MCF 10A (cell line): ENCODE measurements at regions of chr4 and their contacts with region 1.

Region 1: DNA sequence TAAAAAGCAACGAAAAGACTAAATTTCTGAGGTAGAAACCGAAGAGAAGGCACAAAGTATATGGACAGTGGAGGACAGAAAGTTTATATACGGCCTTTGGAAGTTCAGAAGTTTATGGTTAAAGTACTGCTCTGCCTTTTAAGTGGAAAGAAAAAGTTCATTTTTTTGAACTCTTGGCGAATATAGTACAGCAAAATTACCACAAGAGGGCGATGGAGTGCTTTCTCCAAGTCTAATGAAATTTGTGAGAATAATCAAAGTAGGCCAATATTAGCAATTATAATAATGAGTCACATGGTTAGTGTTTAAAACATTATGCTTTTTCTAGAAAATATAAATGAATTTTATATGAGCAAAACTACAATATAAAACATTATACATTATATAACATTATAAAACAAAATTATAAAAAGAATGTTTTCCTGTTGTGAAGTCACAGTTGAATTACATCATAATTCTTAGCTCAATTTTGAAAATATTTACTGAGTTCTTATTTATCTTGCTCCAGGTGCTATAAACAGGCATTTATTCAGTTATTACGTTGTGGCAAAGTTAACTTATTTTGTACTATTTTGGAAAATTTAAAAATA is 136.2 kb upstream of the BMPR1B start:
- DNase-seq: peak; percentile 50
- H3K4me3 Mint-ChIP-seq: no peak overlapping the region
- H3K27ac Mint-ChIP-seq: no peak overlapping the region
- H3K4me1 Mint-ChIP-seq: no peaks in the 10 kb centered on the region
- H3K27me3 Mint-ChIP-seq: no peaks in the 10 kb centered on the region
- CTCF ChIP-seq: peak; percentile 69

Region 2: GRCh38 chr4:94732358-94732698 is 110.7 kb after region 1 on chr4:
- CTCF ChIA-PET with region 1: interaction called, 4 read pairs
- POLR2A ChIA-PET with region 1: no interaction called
- intact Hi-C with region 1: loop called (anchors 5 kb)
- DNase-seq: no peak
- H3K4me3 Mint-ChIP-seq: no peak overlapping the region
- H3K27ac Mint-ChIP-seq: no peak overlapping the region
- H3K4me1 Mint-ChIP-seq: no peaks in the 10 kb centered on the region
- H3K27me3 Mint-ChIP-seq: no peaks in the 10 kb centered on the region
- CTCF ChIP-seq: no peak

Region 3: GRCh38 chr4:95095348-95095974 is 473.9 kb after region 1 on chr4:
- CTCF ChIA-PET with region 1: interaction called, 44 read pairs
- POLR2A ChIA-PET with region 1: interaction called, 5 read pairs
- intact Hi-C with region 1: loop called (anchors 1 kb)
- DNase-seq: peak; percentile 71
- H3K4me3 Mint-ChIP-seq: no peak overlapping the region
- H3K27ac Mint-ChIP-seq: peak overlapping the region; percentile 42
- H3K4me1 Mint-ChIP-seq: peaks cover 20% of the 10 kb centered on the region
- H3K27me3 Mint-ChIP-seq: no peaks in the 10 kb centered on the region
- CTCF ChIP-seq: peak; percentile 67

Region 4: GRCh38 chr4:95114521-95114920 is 492.9 kb after region 1 on chr4:
- CTCF ChIA-PET with region 1: interaction called, 12 read pairs
- POLR2A ChIA-PET with region 1: interaction called, 3 read pairs
- intact Hi-C with region 1: no loop called
- DNase-seq: no peak
- H3K4me3 Mint-ChIP-seq: no peak overlapping the region
- H3K27ac Mint-ChIP-seq: no peak overlapping the region
- H3K4me1 Mint-ChIP-seq: no peaks in the 10 kb centered on the region
- H3K27me3 Mint-ChIP-seq: no peaks in the 10 kb centered on the region
- CTCF ChIP-seq: no peak

Region 5: DNA sequence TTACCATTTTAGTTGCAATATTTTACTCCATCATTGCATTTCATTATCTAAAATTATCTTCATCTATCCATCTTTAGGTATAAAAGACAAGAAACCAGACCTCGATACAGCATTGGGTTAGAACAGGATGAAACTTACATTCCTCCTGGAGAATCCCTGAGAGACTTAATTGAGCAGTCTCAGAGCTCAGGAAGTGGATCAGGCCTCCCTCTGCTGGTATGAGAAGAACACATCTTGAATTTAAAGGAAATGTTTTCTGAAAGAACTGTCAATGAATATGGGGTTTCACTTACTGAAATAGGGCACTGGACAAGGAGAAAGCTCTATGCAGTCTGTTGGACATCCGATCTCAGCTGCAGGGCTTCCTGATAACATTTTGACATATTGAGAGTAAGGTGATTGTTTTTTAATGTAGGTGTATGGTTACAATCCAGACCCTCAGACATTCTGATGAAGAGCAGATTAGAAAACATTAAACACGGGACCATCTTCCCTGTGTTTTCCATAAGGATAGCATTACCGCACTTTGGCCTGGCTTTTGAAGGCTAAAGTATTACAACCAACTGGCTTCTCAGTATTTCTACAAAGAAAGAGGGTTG is 503.4 kb after region 1 on chr4:
- CTCF ChIA-PET with region 1: interaction called, 65 read pairs
- POLR2A ChIA-PET with region 1: interaction called, 4 read pairs
- intact Hi-C with region 1: loop called (anchors 1 kb)
- DNase-seq: peak; percentile 71
- H3K4me3 Mint-ChIP-seq: no peak overlapping the region
- H3K27ac Mint-ChIP-seq: no peak overlapping the region
- H3K4me1 Mint-ChIP-seq: peaks cover 19% of the 10 kb centered on the region
- H3K27me3 Mint-ChIP-seq: no peaks in the 10 kb centered on the region
- CTCF ChIP-seq: peak; percentile 48